Mammary epithelial cell (primary cell): ENCODE measurements at regions of chr15 and their contacts with region 1.

Region 1: GRCh38 chr15:42575188-42576039 is at the start of gene STARD9:
- DNase-seq: peak; percentile 98
- H3K4me3 ChIP-seq: peak within 1 kb of the TSS; percentile 58 to 92 (median 62)
- H3K27ac ChIP-seq: peak within 1 kb of the TSS; percentile 49
- H3K4me1 ChIP-seq: peaks cover 15% of the 10 kb centered on the region
- H3K27me3 ChIP-seq: no peaks in the 10 kb centered on the region
- CTCF ChIP-seq: no peak
- total RNA-seq, gene STARD9: 5.8 to 9.0 TPM

Region 2: GRCh38 chr15:42495361-42496212 is 79.8 kb before region 1 on chr15 and contains the start of gene SNAP23:
- CTCF ChIA-PET with region 1: interaction called, 4 read pairs
- dilution Hi-C with region 1: no loop called
- in situ Hi-C with region 1: no loop called
- intact Hi-C with region 1: loop called (anchors 2 kb)
- DNase-seq: peak; percentile 93
- H3K4me3 ChIP-seq: peak within 1 kb of the TSS; percentile 68 to 86 (median 84)
- H3K27ac ChIP-seq: peak within 1 kb of the TSS; percentile 64
- H3K4me1 ChIP-seq: peaks cover 32% of the 10 kb centered on the region
- H3K27me3 ChIP-seq: no peaks in the 10 kb centered on the region
- CTCF ChIP-seq: no peak
- total RNA-seq, gene SNAP23: 40.0 to 45.7 TPM

Region 3: GRCh38 chr15:42548253-42549031 is 27.0 kb before region 1 on chr15 and contains the starts of genes HAUS2 and LRRC57:
- CTCF ChIA-PET with region 1: no interaction called
- dilution Hi-C with region 1: no loop called
- in situ Hi-C with region 1: no loop called
- intact Hi-C with region 1: loop called (anchors 1 kb)
- DNase-seq: peak; percentile 88
- H3K4me3 ChIP-seq: peak within 1 kb of the TSS; percentile 73 to 98 (median 89)
- H3K27ac ChIP-seq: peak within 1 kb of the TSS; percentile 88
- H3K4me1 ChIP-seq: peaks cover 24% of the 10 kb centered on the region
- H3K27me3 ChIP-seq: no peaks in the 10 kb centered on the region
- CTCF ChIP-seq: no peak
- total RNA-seq, gene HAUS2: 25.3 to 34.3 TPM
- total RNA-seq, gene LRRC57: 29.8 to 42.5 TPM